ENCODE measurements at regions of chr2 and their contacts with region 1.

Region 1: DNA sequence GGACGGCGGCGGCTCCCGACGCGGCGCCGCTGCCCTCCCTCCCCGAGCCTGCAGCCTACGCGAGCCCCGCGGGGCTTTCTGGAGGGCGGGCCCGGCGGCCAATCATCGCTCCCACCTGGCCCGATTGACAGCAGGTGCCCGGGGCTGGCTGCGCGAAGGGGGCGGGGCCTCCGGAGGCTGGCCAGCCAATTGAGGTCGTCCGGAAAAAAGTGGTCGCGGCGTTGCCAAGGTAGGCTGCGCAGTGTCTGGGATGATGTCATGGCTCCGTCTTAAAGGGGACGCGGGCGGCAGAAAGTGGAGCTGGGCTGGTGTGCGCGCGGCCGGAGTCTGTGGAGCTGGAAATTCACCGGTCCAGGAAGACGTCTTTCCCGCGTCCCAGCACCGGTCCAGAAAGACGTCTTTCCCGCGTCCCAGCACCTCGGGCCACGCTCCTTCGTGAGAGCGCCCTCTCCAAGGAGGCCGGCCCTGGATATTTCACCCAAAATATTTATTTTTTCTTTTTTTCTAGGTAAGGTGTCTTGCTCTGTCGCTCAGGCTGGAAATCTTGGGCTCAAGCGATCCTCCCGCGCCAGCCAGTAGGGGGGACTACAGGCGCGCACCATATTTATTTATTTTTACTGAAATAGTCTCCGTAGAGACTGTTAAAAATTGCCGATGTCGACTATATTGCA is at the start of gene ACTR1B:
- DNase-seq: peak; percentile 99
- H3K4me3 ChIP-seq: peak within 1 kb of the TSS; percentile 78
- H3K27ac ChIP-seq: peak within 1 kb of the TSS; percentile 85
- H3K4me1 ChIP-seq: peaks cover 10% of the 10 kb centered on the region
- H3K27me3 ChIP-seq: no peaks in the 10 kb centered on the region
- CTCF ChIP-seq: peak; percentile 73
- total RNA-seq, gene ACTR1B: 36.3 and 41.7 TPM in 2 replicates

Region 2: DNA sequence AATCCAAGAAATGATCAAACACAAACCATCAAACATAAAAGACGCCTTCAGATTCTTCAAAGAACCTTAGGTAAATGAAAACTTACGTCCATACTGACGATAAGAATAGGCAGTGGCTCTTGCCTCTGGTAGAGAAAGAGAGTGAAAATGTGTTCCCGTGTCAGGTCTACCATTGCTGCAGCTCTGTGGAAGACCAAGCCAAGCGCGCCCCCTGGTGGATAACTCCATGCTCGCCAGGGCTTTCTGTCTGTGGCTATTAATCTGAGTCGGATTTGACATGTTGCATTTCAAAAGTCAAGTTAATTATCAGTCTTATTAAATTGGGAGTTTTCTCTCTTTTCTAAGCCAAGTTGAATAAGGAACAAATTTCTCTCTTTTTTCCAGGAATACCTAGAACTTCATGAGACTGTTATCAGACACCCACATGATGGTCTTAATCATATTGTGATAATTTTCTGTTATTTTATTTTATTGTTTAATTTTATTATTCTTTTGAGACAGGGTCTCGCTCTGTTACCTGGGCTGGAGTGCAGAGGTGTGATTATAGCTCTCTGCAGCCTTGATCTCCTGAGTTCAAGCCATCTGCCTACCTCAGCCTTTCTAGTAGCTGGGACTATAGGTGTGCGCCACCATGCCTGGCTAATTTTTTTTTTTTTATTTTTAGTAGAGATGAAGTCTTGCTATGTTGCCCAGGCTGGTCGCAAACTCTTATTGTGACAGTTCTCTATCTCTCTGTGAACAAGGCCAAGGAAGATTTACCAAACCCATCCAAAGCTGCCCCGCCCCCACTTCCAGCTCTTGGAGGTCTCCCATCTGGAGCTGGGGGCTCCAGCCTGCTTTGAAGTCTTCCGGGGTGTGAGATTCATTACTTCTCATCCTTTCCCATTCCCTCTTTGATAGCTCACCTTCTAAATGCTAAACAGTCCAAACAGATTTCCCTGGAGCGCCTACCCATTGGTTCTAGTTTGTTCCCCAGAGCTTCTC is 33.4 kb after region 1 on chr2:
- CTCF ChIA-PET with region 1: interaction called, 6 read pairs
- POLR2A ChIA-PET with region 1: no interaction called
- intact Hi-C with region 1: loop called (anchors 2 kb)
- DNase-seq: peak; percentile 85
- H3K4me3 ChIP-seq: no peak overlapping the region
- H3K27ac ChIP-seq: no peak overlapping the region
- H3K4me1 ChIP-seq: peaks cover 13% of the 10 kb centered on the region
- H3K27me3 ChIP-seq: no peaks in the 10 kb centered on the region
- CTCF ChIP-seq: peak; percentile 92

Region 3: DNA sequence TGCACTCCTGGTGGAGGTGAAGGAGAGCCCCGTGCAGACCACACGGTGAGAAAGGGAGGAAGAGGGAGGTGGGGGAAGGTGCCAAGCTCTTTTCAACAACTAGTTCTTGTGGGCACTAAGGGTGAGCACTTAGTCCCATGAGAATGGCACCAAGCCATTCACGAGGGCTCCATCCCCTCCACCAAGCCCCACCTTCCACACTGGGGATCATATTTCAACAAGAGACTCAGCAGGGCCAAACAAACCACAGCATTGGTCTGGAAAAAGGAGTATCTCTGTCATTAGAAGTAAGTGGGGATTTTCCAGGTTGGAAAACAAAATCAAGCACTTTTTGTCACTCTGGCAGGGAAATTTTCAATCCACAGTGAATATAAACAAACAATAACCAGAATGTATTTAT is 87.7 kb after region 1 on chr2:
- CTCF ChIA-PET with region 1: no interaction called
- POLR2A ChIA-PET with region 1: no interaction called
- intact Hi-C with region 1: no loop called
- DNase-seq: peak; percentile 12
- H3K4me3 ChIP-seq: no peak overlapping the region
- H3K27ac ChIP-seq: no peak overlapping the region
- H3K4me1 ChIP-seq: peaks cover 6% of the 10 kb centered on the region
- H3K27me3 ChIP-seq: no peaks in the 10 kb centered on the region
- CTCF ChIP-seq: no peak